Activated CD4-positive, alpha-beta T cell treated with anti-CD3 and anti-CD28 coated beads for 36 hours (primary cell): ENCODE measurements at regions of chr4 and their contacts with region 1.

Region 1: DNA sequence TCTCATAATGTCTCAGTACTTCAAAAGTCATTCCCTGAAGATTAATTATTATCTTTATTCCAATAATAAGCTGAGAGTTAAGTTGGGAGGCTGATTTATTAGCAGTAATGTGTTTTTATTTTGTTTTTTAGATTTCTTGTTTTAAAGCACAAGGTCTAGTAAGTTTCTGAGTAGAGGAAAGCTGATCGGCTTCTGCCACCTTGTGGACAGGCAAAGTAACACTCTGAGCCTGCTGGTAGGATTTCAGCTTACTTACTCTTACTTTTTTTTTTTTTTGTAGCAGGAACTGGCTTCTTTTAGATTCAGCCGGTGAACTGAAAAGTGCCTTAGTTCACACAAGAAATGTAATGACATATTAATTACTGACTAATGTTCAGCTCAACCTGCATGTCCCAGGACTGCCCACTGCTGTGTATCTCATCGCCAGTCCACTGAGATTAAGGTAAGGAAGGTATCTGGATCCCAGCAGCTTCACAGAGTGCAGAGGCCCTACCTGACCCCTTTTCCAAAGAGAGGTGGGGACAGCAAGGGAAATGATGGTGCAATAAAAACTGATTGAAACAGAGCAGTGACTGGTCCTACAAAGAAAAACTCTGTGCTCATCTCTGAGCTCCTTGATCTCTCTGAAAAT is 126.5 kb downstream of the ADGRA3 start:
- DNase-seq: peak; percentile 69
- ATAC-seq: peak; percentile 49
- H3K4me3 Mint-ChIP-seq: no peak overlapping the region
- H3K27ac Mint-ChIP-seq: no peak overlapping the region
- H3K4me1 Mint-ChIP-seq: peaks cover 11% of the 10 kb centered on the region
- H3K27me3 Mint-ChIP-seq: no peaks in the 10 kb centered on the region

Region 2: DNA sequence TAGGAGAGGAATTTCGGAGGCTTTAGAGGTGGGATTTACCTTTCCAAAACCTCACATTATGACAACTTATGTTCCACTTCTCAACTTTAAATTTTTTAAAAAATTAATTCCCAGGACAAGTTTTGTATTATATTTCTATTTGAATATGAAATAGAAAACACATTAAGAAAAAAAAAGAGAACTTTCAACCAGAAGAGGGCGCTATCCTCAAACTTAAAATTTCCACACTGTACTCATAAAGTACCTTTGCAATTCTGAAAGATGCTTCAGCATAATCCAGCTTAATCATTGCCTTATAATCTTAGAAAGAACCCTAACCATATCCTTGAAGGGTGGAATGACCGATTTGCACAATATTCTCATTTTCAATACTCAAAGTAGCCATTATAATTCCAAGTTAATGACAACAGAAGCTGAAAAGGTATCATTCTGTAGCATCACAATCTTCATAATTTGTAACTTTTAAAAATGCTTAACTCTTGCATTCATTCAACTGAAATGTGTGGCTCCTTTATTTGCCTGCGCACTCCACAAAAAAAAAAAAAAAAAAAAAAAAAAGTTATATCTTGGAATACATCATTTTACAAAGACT is 598.8 kb before region 1 on chr4:
- CTCF ChIA-PET with region 1: interaction called, 124 read pairs
- POLR2A ChIA-PET with region 1: no interaction called
- intact Hi-C with region 1: loop called (anchors 1 kb)
- DNase-seq: no peak
- ATAC-seq: no peak
- H3K4me3 Mint-ChIP-seq: no peak overlapping the region
- H3K27ac Mint-ChIP-seq: no peak overlapping the region
- H3K4me1 Mint-ChIP-seq: no peaks in the 10 kb centered on the region
- H3K27me3 Mint-ChIP-seq: no peaks in the 10 kb centered on the region

Region 3: GRCh38 chr4:21888195-21888976 is 501.0 kb before region 1 on chr4:
- CTCF ChIA-PET with region 1: no interaction called
- POLR2A ChIA-PET with region 1: no interaction called
- intact Hi-C with region 1: loop called (anchors 5 to 10 kb)
- DNase-seq: peak; percentile 8
- ATAC-seq: peak; percentile 74
- H3K4me3 Mint-ChIP-seq: no peak overlapping the region
- H3K27ac Mint-ChIP-seq: peak overlapping the region; percentile 27
- H3K4me1 Mint-ChIP-seq: peaks cover 7% of the 10 kb centered on the region
- H3K27me3 Mint-ChIP-seq: no peaks in the 10 kb centered on the region

Region 4: DNA sequence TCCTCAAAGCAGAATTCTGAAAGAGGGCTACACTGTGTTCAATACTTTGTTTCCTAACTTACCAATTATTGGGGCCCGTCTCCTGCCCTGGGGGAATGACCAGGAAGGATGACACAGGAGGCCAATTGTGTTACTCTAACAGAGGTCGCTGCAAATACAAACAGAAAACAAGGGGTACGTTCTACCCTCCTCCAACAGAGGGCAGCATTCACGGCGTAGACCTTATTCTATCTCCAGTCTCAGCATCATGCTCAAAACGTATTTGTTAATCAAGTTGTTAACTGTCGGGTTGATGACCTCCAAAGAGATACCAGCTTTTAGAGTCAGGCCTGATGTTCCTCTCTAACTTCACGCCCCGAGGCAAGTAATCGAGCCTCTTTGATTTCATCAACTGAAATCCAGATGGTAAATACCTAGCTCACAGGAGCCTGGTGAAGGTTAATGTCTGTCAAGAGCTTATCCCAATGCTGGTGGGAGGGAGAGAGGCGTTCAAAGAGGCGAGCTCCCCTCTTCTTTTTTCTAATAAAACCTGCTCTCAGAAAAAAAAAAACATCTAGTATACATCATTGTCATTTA is 259.8 kb before region 1 on chr4:
- CTCF ChIA-PET with region 1: interaction called, 4 read pairs
- POLR2A ChIA-PET with region 1: no interaction called
- intact Hi-C with region 1: loop called in 1 of 2 experiments (anchors 1 kb)
- DNase-seq: peak; percentile 32
- ATAC-seq: no peak
- H3K4me3 Mint-ChIP-seq: no peak overlapping the region
- H3K27ac Mint-ChIP-seq: no peak overlapping the region
- H3K4me1 Mint-ChIP-seq: no peaks in the 10 kb centered on the region
- H3K27me3 Mint-ChIP-seq: no peaks in the 10 kb centered on the region

Region 5: GRCh38 chr4:22237155-22237751 is 152.1 kb before region 1 on chr4:
- CTCF ChIA-PET with region 1: interaction called, 11 read pairs
- POLR2A ChIA-PET with region 1: no interaction called
- intact Hi-C with region 1: loop called (anchors 1 to 5 kb)
- DNase-seq: peak; percentile 71
- ATAC-seq: no peak
- H3K4me3 Mint-ChIP-seq: no peak overlapping the region
- H3K27ac Mint-ChIP-seq: no peak overlapping the region
- H3K4me1 Mint-ChIP-seq: no peaks in the 10 kb centered on the region
- H3K27me3 Mint-ChIP-seq: no peaks in the 10 kb centered on the region

Region 6: GRCh38 chr4:22410645-22411247 is 21.4 kb after region 1 on chr4:
- CTCF ChIA-PET with region 1: interaction called, 15 read pairs
- POLR2A ChIA-PET with region 1: no interaction called
- intact Hi-C with region 1: no loop called
- DNase-seq: no peak
- ATAC-seq: no peak
- H3K4me3 Mint-ChIP-seq: no peak overlapping the region
- H3K27ac Mint-ChIP-seq: no peak overlapping the region
- H3K4me1 Mint-ChIP-seq: no peaks in the 10 kb centered on the region
- H3K27me3 Mint-ChIP-seq: no peaks in the 10 kb centered on the region

Region 7: GRCh38 chr4:23737571-23737970 is 1348.2 kb after region 1 on chr4:
- CTCF ChIA-PET with region 1: no interaction called
- POLR2A ChIA-PET with region 1: no interaction called
- intact Hi-C with region 1: no loop called
- DNase-seq: no peak
- ATAC-seq: no peak
- H3K4me3 Mint-ChIP-seq: no peak overlapping the region
- H3K27ac Mint-ChIP-seq: no peak overlapping the region
- H3K4me1 Mint-ChIP-seq: no peaks in the 10 kb centered on the region
- H3K27me3 Mint-ChIP-seq: no peaks in the 10 kb centered on the region